Heart right ventricle (tissue), 16 donors: ENCODE measurements at regions of chr3 and their contacts with region 1.

Region 1: GRCh38 chr3:150495563-150496168 is 50.6 kb downstream of the SERP1 start:
- DNase-seq: no peak
- ATAC-seq: peak in 2 of 8 donors; percentile 37 to 38
- H3K4me3 ChIP-seq: no peak overlapping the region
- H3K27ac ChIP-seq: no peak overlapping the region
- H3K4me1 ChIP-seq: peaks cover 0 to 10% (median 0%) of the 10 kb centered on the region in 9 donors
- H3K27me3 ChIP-seq: no peaks in the 10 kb centered on the region
- CTCF ChIP-seq: peak; percentile 60 to 90 (median 81)

Region 2: DNA sequence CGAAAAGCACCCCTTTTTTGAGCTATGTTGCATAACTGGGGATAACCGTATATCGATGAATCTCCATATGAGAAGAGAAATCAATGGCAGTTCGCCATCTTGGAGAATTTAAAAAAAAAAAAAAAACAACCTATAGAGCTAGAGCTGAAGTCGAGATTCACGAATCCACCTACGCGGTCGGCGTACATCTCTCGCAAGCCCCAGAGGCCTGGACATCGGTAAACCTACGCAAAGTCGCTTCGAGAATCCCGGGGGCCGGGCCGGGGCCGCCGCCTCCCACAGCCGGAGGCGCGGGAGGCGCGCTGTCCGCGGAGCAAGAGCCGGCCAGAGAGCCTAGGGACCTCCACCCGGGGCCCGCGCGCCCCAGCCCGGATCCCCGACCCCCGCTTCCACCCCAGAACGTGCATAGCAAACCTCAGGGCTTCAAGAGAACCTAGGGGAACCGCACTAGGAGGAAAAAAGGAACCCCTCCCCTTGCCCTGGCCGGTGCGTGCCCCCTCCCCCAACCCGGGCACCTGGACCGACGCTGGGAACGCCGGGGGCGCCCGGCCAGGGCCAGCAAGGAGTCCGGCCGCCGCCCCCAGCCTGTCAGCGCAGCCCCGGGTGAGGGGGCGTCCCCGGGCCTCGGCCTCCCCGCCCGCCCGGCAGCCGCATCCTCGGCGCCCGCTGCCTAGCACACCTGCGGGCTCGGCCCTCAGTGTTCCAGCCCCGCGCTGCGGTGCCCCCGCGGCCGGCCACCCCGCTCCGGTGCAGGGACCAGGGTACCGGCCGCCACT is 525.5 kb before region 1 on chr3:
- intact Hi-C with region 1: loop called in 4 of 10 experiments (anchors 10 kb)
- DNase-seq: peak; percentile 81 to 83
- ATAC-seq: peak; percentile 65 to 81 (median 78)
- H3K4me3 ChIP-seq: peak overlapping the region; percentile 77 to 98 (median 84)
- H3K27ac ChIP-seq: peak overlapping the region; percentile 64 to 96 (median 92)
- H3K4me1 ChIP-seq: peaks cover 0 to 45% (median 39%) of the 10 kb centered on the region in 9 donors
- H3K27me3 ChIP-seq: peaks cover 0 to 55% (median 0%) of the 10 kb centered on the region in 7 donors
- CTCF ChIP-seq: no peak

Region 3: DNA sequence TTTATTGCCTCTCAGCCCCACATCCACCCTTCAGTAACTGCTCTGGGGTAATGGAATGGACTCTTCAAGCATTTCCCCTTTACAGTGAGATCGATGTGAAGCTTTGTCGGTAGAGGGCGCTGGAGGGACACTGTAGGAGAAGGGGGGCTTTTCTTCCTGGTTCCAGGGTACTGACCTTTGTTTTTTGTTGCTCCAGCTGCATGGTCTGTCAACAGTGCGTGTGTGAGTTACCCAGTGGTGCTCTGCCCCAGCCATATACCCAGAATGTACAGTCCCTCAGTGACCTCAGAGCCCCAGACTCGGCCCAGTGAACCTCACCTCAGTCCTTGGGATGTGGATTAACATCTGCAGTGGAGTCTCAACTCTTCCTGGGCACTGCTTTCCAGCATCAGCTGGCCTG is 267.8 kb before region 1 on chr3:
- intact Hi-C with region 1: loop called (anchors 5 to 10 kb)
- DNase-seq: peak; percentile 11 to 59
- ATAC-seq: peak in 6 of 8 donors; percentile 14 to 47 (median 28)
- H3K4me3 ChIP-seq: no peak overlapping the region
- H3K27ac ChIP-seq: no peak overlapping the region
- H3K4me1 ChIP-seq: peaks cover 0 to 34% (median 6%) of the 10 kb centered on the region in 9 donors
- H3K27me3 ChIP-seq: peaks cover 0 to 7% (median 0%) of the 10 kb centered on the region in 7 donors
- CTCF ChIP-seq: peak; percentile 42 to 74 (median 61)

Region 4: GRCh38 chr3:150286390-150287147 is 209.1 kb before region 1 on chr3:
- intact Hi-C with region 1: loop called in 9 of 10 experiments (anchors 1 to 5 kb)
- DNase-seq: no peak
- ATAC-seq: peak in 6 of 8 donors; percentile 48 to 82 (median 75)
- H3K4me3 ChIP-seq: no peak overlapping the region
- H3K27ac ChIP-seq: no peak overlapping the region
- H3K4me1 ChIP-seq: peaks cover 0 to 2% (median 0%) of the 10 kb centered on the region in 9 donors
- H3K27me3 ChIP-seq: no peaks in the 10 kb centered on the region
- CTCF ChIP-seq: peak; percentile 33 to 70 (median 57)

Region 5: DNA sequence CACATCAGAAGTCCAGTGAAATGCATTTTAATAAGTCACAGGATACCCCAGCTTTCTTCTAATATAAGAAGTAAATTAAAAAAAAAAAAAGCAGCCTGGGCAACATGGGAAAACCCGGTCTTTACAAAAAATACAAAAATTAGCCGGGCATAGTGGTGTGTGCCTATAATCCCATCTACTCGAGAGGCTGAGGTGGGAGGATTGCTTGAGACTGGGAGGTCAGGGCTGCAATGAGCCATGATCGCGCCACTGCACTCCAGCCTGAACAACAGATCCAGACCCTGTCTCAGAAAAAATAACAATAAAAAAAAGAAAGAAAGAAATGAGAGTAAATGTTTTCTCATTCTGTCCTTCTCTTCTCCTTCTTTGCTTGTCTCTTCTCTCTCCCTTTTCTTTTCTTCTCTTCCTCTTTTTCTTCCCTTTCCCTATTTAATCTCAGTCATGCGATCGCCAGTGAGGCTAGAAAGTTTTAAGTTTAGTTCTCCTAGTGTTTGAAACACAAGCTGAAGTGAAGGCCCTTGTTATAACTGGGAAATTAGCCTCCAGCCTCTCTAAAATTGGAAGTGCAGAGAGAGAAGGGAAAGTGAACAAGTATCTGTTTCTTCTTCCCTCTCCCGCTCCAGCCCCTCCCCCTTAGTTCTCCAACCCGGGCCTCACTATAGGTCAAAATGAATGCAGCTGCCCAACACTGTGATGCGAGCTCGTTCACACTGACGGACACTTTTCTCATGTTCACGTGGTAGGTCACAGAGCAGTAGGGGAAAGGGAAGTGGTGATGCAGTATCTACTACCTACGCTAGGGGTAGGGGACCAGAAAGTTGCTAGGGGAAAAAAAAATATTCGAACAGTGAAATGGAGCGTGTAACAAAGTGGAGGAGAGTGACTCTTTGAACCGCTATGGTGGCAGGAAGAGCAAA is 111.1 kb before region 1 on chr3:
- intact Hi-C with region 1: no loop called
- DNase-seq: no peak
- ATAC-seq: peak in 7 of 8 donors; percentile 47 to 75 (median 61)
- H3K4me3 ChIP-seq: peak overlapping the region in 1 of 10 donors; percentile 17
- H3K27ac ChIP-seq: peak overlapping the region in 1 of 10 donors; percentile 37
- H3K4me1 ChIP-seq: peaks cover 0 to 25% (median 15%) of the 10 kb centered on the region in 9 donors
- H3K27me3 ChIP-seq: no peaks in the 10 kb centered on the region
- CTCF ChIP-seq: peak in 1 of 9 donors; percentile 43

Region 6: DNA sequence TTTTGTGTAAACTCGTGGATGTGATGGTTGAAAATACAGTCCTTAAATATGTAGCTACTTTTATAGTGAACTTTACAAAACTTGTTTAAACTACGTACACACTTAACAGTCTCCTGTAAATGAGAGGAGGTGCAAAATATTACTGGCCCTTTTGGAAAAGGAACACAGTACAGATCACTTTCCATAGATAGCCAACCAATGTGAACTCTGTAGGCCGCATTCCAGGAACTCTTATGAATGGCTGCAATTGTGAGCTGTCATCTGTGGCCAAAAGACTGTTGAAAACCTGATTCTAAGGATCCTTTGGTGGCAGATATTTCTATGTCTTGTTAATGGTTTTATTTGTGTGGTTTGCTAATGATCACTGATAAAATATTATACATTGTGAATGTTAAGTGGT is 81.4 kb before region 1 on chr3:
- intact Hi-C with region 1: loop called in 8 of 10 experiments (anchors 2 to 10 kb)
- DNase-seq: peak in 1 of 2 donors; percentile 44
- ATAC-seq: peak in 4 of 8 donors; percentile 26 to 60 (median 42)
- H3K4me3 ChIP-seq: peak overlapping the region in 7 of 10 donors; percentile 19 to 92 (median 85)
- H3K27ac ChIP-seq: peak overlapping the region in 4 of 10 donors; percentile 1 to 32 (median 15)
- H3K4me1 ChIP-seq: peaks cover 8 to 80% (median 66%) of the 10 kb centered on the region in 9 donors
- H3K27me3 ChIP-seq: no peaks in the 10 kb centered on the region
- CTCF ChIP-seq: no peak

Region 7: DNA sequence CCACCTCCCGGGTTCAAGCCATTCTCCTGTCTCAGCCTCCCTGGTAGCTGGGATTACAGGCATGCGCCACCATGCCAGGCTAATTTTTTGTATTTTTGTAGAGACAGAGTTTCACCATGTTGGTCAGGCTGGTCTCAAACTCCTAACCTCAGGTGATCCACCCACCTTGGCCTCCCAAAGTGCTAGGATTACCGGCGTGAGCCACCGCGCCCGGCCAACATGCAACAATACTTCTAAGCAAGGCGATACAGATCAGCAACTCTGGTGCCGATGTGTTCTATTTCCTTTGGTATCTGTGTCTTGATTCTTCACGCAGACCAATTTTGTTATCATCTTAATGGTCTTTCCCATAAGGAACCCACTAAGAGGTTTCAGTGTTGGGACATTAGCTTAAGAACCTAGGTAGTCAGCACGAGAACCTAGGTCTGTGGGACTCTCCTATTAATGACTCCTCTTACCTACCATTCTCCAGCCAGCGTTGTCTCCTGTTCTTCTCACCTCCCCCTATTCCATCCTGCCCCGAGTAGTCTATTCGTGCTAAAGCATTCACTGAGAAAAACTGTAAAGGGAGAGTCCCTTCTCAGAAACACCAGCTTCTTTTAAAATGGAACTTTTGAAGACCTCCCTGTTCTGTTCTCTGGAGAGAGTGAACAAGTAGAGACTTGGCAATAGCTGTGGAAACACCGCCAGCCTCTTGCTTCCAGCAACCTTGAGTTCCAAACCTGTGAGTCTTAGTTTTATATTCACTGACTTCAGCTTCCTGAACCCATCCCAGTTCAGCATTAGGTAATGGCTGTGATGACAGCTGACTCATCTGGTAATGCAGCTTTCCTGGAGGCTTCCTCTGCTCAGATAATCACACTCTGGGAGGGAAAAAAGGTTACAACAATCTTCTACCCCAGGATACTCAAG is 26.4 kb before region 1 on chr3:
- intact Hi-C with region 1: no loop called
- DNase-seq: peak in 1 of 2 donors; percentile 8
- ATAC-seq: peak in 7 of 8 donors; percentile 38 to 96 (median 75)
- H3K4me3 ChIP-seq: no peak overlapping the region
- H3K27ac ChIP-seq: peak overlapping the region in 1 of 10 donors; percentile 7
- H3K4me1 ChIP-seq: peaks cover 0 to 12% (median 0%) of the 10 kb centered on the region in 9 donors
- H3K27me3 ChIP-seq: no peaks in the 10 kb centered on the region
- CTCF ChIP-seq: no peak